CD4-positive, alpha-beta memory T cell (primary cell): ENCODE measurements at regions of chr3 and their contacts with region 1.

Region 1: DNA sequence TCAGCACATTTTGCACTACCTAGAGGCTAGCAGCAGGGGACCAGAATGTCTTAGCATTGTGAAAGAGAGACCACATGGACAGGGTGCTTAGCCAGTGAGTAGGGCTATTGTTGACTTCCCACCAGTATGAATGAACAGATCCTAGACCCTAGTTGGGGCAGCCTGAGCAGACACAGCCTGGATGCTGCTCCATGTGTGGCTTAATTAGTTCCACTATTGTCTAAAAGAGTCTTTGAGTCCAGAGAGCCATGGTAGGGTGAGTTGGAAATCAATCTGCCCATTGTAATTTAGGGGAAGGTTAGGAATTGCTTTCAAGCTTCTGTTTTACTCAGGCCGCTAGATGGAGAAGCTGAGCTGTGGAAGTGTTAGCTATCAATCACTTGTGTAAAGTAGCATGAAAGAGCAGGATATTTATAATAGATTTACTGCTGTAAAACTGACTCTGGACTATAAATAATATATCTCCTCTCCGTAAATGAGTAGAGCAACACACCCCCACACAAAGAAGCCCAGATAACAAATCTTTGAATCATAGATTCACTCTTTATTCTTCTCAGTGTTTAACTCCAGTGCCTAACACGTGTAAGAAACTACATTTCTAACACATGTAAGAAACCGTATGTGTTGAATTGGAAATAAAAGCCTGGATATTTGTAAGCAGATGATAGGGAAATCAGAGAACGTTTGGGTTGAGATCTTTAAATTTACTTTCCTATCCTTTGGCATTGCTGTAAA is 4.1 kb upstream of the GCSAM start:
- DNase-seq: peak in 4 of 5 donors; percentile 41 to 50 (median 45)
- H3K4me3 ChIP-seq: no peak overlapping the region
- H3K4me3 Mint-ChIP-seq: peak overlapping the region in 1 of 8 donors; percentile 40
- H3K27ac ChIP-seq: no peak overlapping the region
- H3K27ac Mint-ChIP-seq: peak overlapping the region; percentile 10 to 99 (median 68)
- H3K4me1 ChIP-seq: peaks cover 58% of the 10 kb centered on the region
- H3K4me1 Mint-ChIP-seq: peaks cover 45 to 61% (median 53%) of the 10 kb centered on the region in 4 donors
- H3K27me3 ChIP-seq: no peaks in the 10 kb centered on the region
- H3K27me3 Mint-ChIP-seq: no peaks in the 10 kb centered on the region

Region 2: DNA sequence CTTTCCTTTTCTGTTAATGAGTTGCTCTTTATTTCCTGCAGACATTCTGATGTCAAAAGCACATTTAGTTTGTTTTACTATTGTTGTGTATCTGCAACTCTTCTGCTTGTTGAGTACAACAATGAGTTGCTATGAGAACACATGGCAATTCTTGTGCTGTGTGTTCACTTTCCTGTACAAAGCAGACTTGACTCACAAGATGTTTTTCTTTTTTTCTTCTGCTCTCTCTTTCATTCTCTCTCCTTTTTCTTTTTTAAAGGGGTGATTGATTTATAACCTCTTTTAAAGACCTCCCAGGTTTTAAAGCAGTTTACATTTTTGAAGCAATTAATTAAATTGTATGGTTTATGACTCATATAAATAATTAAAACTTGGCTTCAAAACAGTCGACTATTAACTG is 189.9 kb before region 1 on chr3:
- CTCF ChIA-PET with region 1: no interaction called
- POLR2A ChIA-PET with region 1: no interaction called
- intact Hi-C with region 1: no loop called
- DNase-seq: no peak
- H3K4me3 ChIP-seq: no peak overlapping the region
- H3K4me3 Mint-ChIP-seq: no peak overlapping the region
- H3K27ac ChIP-seq: no peak overlapping the region
- H3K27ac Mint-ChIP-seq: no peak overlapping the region
- H3K4me1 ChIP-seq: no peaks in the 10 kb centered on the region
- H3K4me1 Mint-ChIP-seq: no peaks in the 10 kb centered on the region
- H3K27me3 ChIP-seq: no peaks in the 10 kb centered on the region
- H3K27me3 Mint-ChIP-seq: peaks cover 0 to 1% of the 10 kb centered on the region in 2 donors

Region 3: DNA sequence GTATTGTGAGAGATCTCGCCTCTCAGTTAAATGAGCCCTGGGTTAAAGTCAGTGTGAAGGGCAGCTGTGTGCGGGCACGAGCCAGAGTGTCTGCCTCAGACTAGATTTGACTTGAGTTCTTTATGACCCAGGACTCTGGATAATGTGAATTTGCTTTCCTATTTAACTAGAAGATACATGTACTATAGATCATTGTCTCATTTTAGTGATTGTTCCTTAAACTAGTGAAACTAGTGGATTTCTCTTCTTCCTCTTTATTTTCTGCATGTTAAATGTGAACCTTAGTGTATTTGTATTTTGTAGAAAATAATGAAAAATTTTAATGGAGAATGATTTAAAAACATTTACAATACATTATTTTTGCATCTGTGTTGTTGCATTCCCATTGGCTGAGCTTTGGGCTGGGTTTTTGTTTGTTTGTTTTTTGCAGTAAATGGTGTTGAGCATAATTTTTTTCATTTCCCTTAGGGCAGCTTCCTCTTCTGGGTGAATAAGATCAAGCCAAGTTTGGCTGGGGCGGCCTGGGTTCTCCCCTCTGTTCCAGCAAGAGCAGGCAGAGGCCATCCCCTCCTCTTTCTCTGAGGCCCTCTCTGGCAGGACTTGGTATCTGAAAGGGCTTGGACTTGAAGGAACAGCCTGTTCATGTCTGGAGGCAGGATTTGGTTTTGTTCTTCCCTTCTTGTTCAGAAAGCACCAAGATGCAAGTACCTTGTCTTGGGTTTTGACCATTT is 19.1 kb before region 1 on chr3:
- CTCF ChIA-PET with region 1: interaction called, 21 read pairs
- POLR2A ChIA-PET with region 1: interaction called, 18 read pairs
- intact Hi-C with region 1: no loop called
- DNase-seq: no peak
- H3K4me3 ChIP-seq: no peak overlapping the region
- H3K4me3 Mint-ChIP-seq: no peak overlapping the region
- H3K27ac ChIP-seq: no peak overlapping the region
- H3K27ac Mint-ChIP-seq: peak overlapping the region in 2 of 7 donors; percentile 31 to 43
- H3K4me1 ChIP-seq: peaks cover 27% of the 10 kb centered on the region
- H3K4me1 Mint-ChIP-seq: peaks cover 29 to 38% (median 30%) of the 10 kb centered on the region in 4 donors
- H3K27me3 ChIP-seq: no peaks in the 10 kb centered on the region
- H3K27me3 Mint-ChIP-seq: no peaks in the 10 kb centered on the region

Region 4: GRCh38 chr3:112293368-112294321 is 156.5 kb after region 1 on chr3 and contains the start of gene SLC9C1:
- CTCF ChIA-PET with region 1: interaction called, 43 read pairs
- POLR2A ChIA-PET with region 1: no interaction called
- intact Hi-C with region 1: loop called (anchors 2 kb)
- DNase-seq: peak in 4 of 5 donors; percentile 35 to 56 (median 38)
- H3K4me3 ChIP-seq: no peak within 1 kb of the TSS
- H3K4me3 Mint-ChIP-seq: peak within 1 kb of the TSS; percentile 9 to 76 (median 48)
- H3K27ac ChIP-seq: no peak within 1 kb of the TSS
- H3K27ac Mint-ChIP-seq: peak within 1 kb of the TSS in 1 of 7 donors; percentile 17
- H3K4me1 ChIP-seq: peaks cover 19% of the 10 kb centered on the region
- H3K4me1 Mint-ChIP-seq: peaks cover 15 to 28% (median 25%) of the 10 kb centered on the region in 4 donors
- H3K27me3 ChIP-seq: no peaks in the 10 kb centered on the region
- H3K27me3 Mint-ChIP-seq: peaks cover 0 to 2% of the 10 kb centered on the region in 2 donors
- total RNA-seq, gene SLC9C1: not detected

Region 5: GRCh38 chr3:112327371-112327951 is 190.3 kb after region 1 on chr3:
- CTCF ChIA-PET with region 1: interaction called, 7 read pairs
- POLR2A ChIA-PET with region 1: no interaction called
- intact Hi-C with region 1: loop called (anchors 1 kb)
- DNase-seq: peak; percentile 56 to 66 (median 60)
- H3K4me3 ChIP-seq: no peak overlapping the region
- H3K4me3 Mint-ChIP-seq: no peak overlapping the region
- H3K27ac ChIP-seq: no peak overlapping the region
- H3K27ac Mint-ChIP-seq: no peak overlapping the region
- H3K4me1 ChIP-seq: no peaks in the 10 kb centered on the region
- H3K4me1 Mint-ChIP-seq: peaks cover 0 to 7% (median under 1%) of the 10 kb centered on the region in 4 donors
- H3K27me3 ChIP-seq: no peaks in the 10 kb centered on the region
- H3K27me3 Mint-ChIP-seq: peaks cover 4 to 6% of the 10 kb centered on the region in 2 donors

Region 6: DNA sequence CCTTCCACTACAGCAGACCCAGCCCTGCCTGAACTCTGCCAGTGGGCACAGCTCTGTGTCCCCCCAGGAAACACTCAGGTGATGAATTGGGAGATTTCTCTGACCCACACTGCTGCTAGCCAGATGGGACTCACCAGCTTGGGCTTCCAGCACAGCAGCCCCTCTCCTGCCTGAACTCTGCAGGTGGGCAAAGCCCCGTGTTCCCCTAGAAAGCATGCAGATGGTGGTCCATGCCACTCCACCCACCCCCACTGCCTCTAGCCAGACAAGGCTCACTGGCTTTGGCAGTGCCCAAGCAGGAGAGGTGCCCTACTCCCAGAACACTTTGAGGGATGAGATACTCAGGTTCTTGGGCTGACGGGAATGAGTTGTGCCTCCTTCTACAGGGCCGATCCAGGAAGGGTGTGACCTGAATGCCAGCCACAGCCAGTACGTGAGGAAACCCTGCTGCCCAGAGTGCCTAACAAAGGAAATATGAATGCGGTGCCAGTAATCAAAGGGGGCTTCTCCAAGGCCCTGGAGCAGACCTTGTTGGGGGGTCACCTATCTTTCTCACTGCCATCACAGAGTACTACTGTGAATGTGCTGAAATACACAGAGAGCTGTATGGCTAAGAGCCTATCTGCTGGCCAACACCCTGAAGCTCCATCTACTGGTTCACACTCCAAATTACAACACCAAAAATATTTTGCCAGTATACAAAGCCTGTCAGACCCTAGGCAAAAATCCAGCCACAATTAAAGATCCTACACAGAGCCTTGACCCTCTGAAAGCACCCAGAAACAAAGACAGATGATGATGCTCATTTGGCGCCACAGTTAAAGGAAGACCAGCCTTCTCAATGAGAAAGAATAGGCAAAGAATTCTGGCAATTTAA is 300.3 kb after region 1 on chr3:
- CTCF ChIA-PET with region 1: interaction called, 10 read pairs
- POLR2A ChIA-PET with region 1: no interaction called
- intact Hi-C with region 1: loop called (anchors 1 kb)
- DNase-seq: peak in 4 of 5 donors; percentile 24 to 39 (median 32)
- H3K4me3 ChIP-seq: no peak overlapping the region
- H3K4me3 Mint-ChIP-seq: peak overlapping the region in 7 of 8 donors; percentile 39 to 84 (median 63)
- H3K27ac ChIP-seq: no peak overlapping the region
- H3K27ac Mint-ChIP-seq: peak overlapping the region in 5 of 7 donors; percentile 16 to 45 (median 42)
- H3K4me1 ChIP-seq: peaks cover 9% of the 10 kb centered on the region
- H3K4me1 Mint-ChIP-seq: peaks cover 9 to 24% (median 19%) of the 10 kb centered on the region in 4 donors
- H3K27me3 ChIP-seq: no peaks in the 10 kb centered on the region
- H3K27me3 Mint-ChIP-seq: no peaks in the 10 kb centered on the region

Region 7: DNA sequence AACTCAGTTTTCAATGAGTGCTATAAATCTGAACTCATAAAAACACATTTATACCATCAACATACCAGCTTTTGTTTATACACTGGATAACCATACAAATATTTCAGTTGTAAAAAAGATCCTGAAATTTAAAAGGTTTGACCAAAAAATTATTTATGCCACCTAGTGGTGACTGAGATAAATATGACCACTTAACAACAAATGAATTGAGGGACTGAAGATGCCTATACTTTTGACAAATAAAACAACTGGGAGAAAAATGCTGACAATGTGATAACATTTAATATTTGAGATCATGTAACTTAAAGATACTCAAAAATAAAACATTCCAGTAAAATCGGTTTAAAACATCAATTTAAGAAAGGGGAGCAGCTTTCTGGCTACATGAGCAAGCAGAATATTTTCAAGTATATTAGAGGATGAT is 394.2 kb after region 1 on chr3:
- CTCF ChIA-PET with region 1: interaction called, 7 read pairs
- POLR2A ChIA-PET with region 1: no interaction called
- intact Hi-C with region 1: loop called (anchors 1 kb)
- DNase-seq: peak in 4 of 5 donors; percentile 22 to 37 (median 30)
- H3K4me3 ChIP-seq: no peak overlapping the region
- H3K4me3 Mint-ChIP-seq: no peak overlapping the region
- H3K27ac ChIP-seq: no peak overlapping the region
- H3K27ac Mint-ChIP-seq: peak overlapping the region in 2 of 7 donors; percentile 5 to 12
- H3K4me1 ChIP-seq: no peaks in the 10 kb centered on the region
- H3K4me1 Mint-ChIP-seq: peaks cover 0 to 4% (median 2%) of the 10 kb centered on the region in 4 donors
- H3K27me3 ChIP-seq: no peaks in the 10 kb centered on the region
- H3K27me3 Mint-ChIP-seq: no peaks in the 10 kb centered on the region